B cell (primary cell): ENCODE measurements at regions of chr20 and their contacts with region 1.

Region 1: GRCh38 chr20:13771853-13772453 is 12.8 kb downstream of the ESF1 start:
- DNase-seq: peak; percentile 37
- ATAC-seq: no peak
- H3K4me3 ChIP-seq: no peak overlapping the region
- H3K4me3 Mint-ChIP-seq: no peak overlapping the region
- H3K27ac ChIP-seq: no peak overlapping the region
- H3K27ac Mint-ChIP-seq: no peak overlapping the region
- H3K4me1 ChIP-seq: no peaks in the 10 kb centered on the region
- H3K4me1 Mint-ChIP-seq: peaks cover 7% of the 10 kb centered on the region
- H3K27me3 ChIP-seq: no peaks in the 10 kb centered on the region
- H3K27me3 Mint-ChIP-seq: no peaks in the 10 kb centered on the region
- CTCF ChIP-seq: peak; percentile 89

Region 2: GRCh38 chr20:12970372-12970821 is 801.6 kb before region 1 on chr20:
- CTCF ChIA-PET with region 1: no interaction called
- POLR2A ChIA-PET with region 1: no interaction called
- intact Hi-C with region 1: loop called (anchors 5 kb)
- DNase-seq: peak; percentile 6
- ATAC-seq: no peak
- H3K4me3 ChIP-seq: no peak overlapping the region
- H3K4me3 Mint-ChIP-seq: no peak overlapping the region
- H3K27ac ChIP-seq: no peak overlapping the region
- H3K27ac Mint-ChIP-seq: no peak overlapping the region
- H3K4me1 ChIP-seq: no peaks in the 10 kb centered on the region
- H3K4me1 Mint-ChIP-seq: no peaks in the 10 kb centered on the region
- H3K27me3 ChIP-seq: no peaks in the 10 kb centered on the region
- H3K27me3 Mint-ChIP-seq: no peaks in the 10 kb centered on the region
- CTCF ChIP-seq: peak; percentile 25

Region 3: GRCh38 chr20:13325033-13325432 is 446.9 kb before region 1 on chr20:
- CTCF ChIA-PET with region 1: no interaction called
- POLR2A ChIA-PET with region 1: no interaction called
- intact Hi-C with region 1: loop called (anchors 10 kb)
- DNase-seq: no peak
- ATAC-seq: no peak
- H3K4me3 ChIP-seq: no peak overlapping the region
- H3K4me3 Mint-ChIP-seq: no peak overlapping the region
- H3K27ac ChIP-seq: no peak overlapping the region
- H3K27ac Mint-ChIP-seq: no peak overlapping the region
- H3K4me1 ChIP-seq: no peaks in the 10 kb centered on the region
- H3K4me1 Mint-ChIP-seq: no peaks in the 10 kb centered on the region
- H3K27me3 ChIP-seq: peaks cover 0 to 3% (median 2%) of the 10 kb centered on the region in 4 experiments
- H3K27me3 Mint-ChIP-seq: peaks cover 17% of the 10 kb centered on the region
- CTCF ChIP-seq: no peak

Region 4: DNA sequence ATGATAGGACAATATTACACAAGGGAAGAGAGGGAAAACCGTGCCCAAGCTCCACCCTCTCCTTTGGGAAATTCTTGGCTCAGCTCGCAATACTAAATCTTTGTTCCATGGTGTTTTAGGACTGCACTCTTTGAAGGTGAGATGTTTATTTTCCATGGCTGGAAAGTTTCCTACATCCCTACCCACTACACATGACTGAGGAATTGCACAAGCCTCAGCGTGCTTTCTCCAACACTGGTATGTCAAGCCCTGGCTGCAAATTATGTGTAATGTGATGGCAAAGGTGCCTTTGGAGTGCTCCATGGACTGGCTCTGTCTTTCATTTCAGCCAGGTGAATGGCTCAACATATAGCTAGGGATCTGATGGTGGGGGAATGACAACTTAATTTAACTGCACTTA is 416.5 kb before region 1 on chr20:
- CTCF ChIA-PET with region 1: no interaction called
- POLR2A ChIA-PET with region 1: no interaction called
- intact Hi-C with region 1: no loop called
- DNase-seq: no peak
- ATAC-seq: no peak
- H3K4me3 ChIP-seq: no peak overlapping the region
- H3K4me3 Mint-ChIP-seq: no peak overlapping the region
- H3K27ac ChIP-seq: no peak overlapping the region
- H3K27ac Mint-ChIP-seq: no peak overlapping the region
- H3K4me1 ChIP-seq: no peaks in the 10 kb centered on the region
- H3K4me1 Mint-ChIP-seq: no peaks in the 10 kb centered on the region
- H3K27me3 ChIP-seq: no peaks in the 10 kb centered on the region
- H3K27me3 Mint-ChIP-seq: no peaks in the 10 kb centered on the region
- CTCF ChIP-seq: no peak

Region 5: DNA sequence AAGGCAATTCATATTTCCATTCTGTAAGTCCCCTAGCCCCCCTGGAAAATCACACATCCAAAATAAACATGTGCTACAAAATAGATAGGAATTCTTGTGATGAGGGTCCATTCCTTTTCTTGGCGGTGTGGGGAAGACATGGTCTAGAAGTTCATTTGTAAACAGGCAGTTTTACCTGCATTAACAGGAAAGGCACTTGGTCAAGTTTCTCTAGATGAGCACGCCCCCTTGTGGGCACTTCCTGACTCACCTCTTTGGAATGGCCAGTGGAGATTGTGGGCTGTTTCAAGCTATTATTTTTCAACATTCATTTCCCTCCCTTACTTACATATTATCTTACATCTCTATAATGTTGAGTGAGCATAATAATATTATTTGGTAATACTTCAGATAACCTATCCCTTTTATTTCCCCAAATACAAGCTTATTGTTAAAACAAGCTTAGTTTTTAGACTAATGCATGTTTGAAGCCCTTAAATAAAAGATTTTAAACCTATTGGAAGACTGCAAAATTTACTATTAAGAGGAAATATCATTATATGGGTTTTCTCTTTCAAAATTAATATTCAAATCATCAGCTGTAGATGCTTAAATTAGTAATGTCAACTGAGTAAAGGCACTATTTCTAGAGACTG is 225.3 kb before region 1 on chr20:
- CTCF ChIA-PET with region 1: interaction called, 23 read pairs
- POLR2A ChIA-PET with region 1: no interaction called
- intact Hi-C with region 1: no loop called
- DNase-seq: peak; percentile 55
- ATAC-seq: no peak
- H3K4me3 ChIP-seq: no peak overlapping the region
- H3K4me3 Mint-ChIP-seq: no peak overlapping the region
- H3K27ac ChIP-seq: no peak overlapping the region
- H3K27ac Mint-ChIP-seq: no peak overlapping the region
- H3K4me1 ChIP-seq: no peaks in the 10 kb centered on the region
- H3K4me1 Mint-ChIP-seq: no peaks in the 10 kb centered on the region
- H3K27me3 ChIP-seq: no peaks in the 10 kb centered on the region
- H3K27me3 Mint-ChIP-seq: no peaks in the 10 kb centered on the region
- CTCF ChIP-seq: peak; percentile 81

Region 6: DNA sequence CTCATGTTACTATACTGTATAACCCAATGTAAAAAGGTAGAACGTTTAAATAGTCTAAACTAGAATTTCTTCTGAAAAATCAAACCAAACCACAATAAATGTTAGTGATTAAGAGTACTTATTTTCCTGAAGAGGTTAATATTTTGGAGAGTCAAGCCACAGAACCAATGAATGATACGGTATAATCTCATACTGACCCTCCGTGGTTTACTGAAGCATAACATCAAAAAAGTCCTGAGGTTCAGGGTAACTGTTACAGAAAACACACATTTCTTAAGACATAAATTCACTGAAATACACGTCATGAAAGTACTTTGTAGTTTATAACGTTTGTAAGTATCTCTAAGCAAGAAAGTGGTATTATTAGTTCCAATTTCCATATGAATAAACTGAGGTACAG is 16.1 kb before region 1 on chr20:
- CTCF ChIA-PET with region 1: interaction called, 26 read pairs
- POLR2A ChIA-PET with region 1: no interaction called
- intact Hi-C with region 1: no loop called
- DNase-seq: no peak
- ATAC-seq: no peak
- H3K4me3 ChIP-seq: no peak overlapping the region
- H3K4me3 Mint-ChIP-seq: no peak overlapping the region
- H3K27ac ChIP-seq: no peak overlapping the region
- H3K27ac Mint-ChIP-seq: no peak overlapping the region
- H3K4me1 ChIP-seq: no peaks in the 10 kb centered on the region
- H3K4me1 Mint-ChIP-seq: peaks cover 7% of the 10 kb centered on the region
- H3K27me3 ChIP-seq: no peaks in the 10 kb centered on the region
- H3K27me3 Mint-ChIP-seq: no peaks in the 10 kb centered on the region
- CTCF ChIP-seq: no peak

Region 7: DNA sequence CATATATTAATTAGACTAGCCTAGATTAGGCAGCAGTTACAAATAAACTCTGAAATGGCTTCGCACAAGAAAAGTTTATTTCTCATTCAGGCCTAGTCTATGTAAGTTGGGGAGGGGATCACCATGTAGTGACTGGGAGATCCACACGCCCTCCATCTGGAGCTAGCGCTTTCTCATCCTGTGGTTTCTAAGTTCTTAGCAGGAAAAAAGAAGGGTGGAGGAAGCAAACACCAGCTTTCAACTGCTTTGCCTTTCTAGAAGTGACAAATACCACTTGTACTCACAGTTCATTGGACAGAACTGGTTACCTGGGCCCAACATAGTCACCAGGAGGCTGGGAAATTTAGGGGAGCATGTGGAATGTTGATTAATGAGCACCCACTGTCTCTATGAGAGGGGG is 59.5 kb after region 1 on chr20:
- CTCF ChIA-PET with region 1: no interaction called
- POLR2A ChIA-PET with region 1: no interaction called
- intact Hi-C with region 1: no loop called
- DNase-seq: no peak
- ATAC-seq: no peak
- H3K4me3 ChIP-seq: no peak overlapping the region
- H3K4me3 Mint-ChIP-seq: no peak overlapping the region
- H3K27ac ChIP-seq: no peak overlapping the region
- H3K27ac Mint-ChIP-seq: no peak overlapping the region
- H3K4me1 ChIP-seq: no peaks in the 10 kb centered on the region
- H3K4me1 Mint-ChIP-seq: no peaks in the 10 kb centered on the region
- H3K27me3 ChIP-seq: peaks cover 0 to 4% (median 0%) of the 10 kb centered on the region in 4 experiments
- H3K27me3 Mint-ChIP-seq: peaks cover 18% of the 10 kb centered on the region
- CTCF ChIP-seq: no peak